Activated CD8-positive, alpha-beta T cell treated with anti-CD3 and anti-CD28 coated beads for 36 hours (primary cell): ENCODE measurements at regions of chr2 and their contacts with region 1.

Region 1: GRCh38 chr2:24577481-24577880 is 86.4 kb downstream of the NCOA1 start:
- DNase-seq: no peak
- ATAC-seq: peak; percentile 74
- H3K4me3 Mint-ChIP-seq: peak overlapping the region; percentile 51
- H3K27ac Mint-ChIP-seq: peak overlapping the region; percentile 66
- H3K4me1 Mint-ChIP-seq: peaks cover 78% of the 10 kb centered on the region
- H3K27me3 Mint-ChIP-seq: no peaks in the 10 kb centered on the region
- CTCF ChIP-seq: no peak

Region 2: GRCh38 chr2:24509425-24509824 is 68.1 kb before region 1 on chr2:
- CTCF ChIA-PET with region 1: no interaction called
- POLR2A ChIA-PET with region 1: no interaction called
- intact Hi-C with region 1: loop called (anchors 5 kb)
- DNase-seq: no peak
- ATAC-seq: no peak
- H3K4me3 Mint-ChIP-seq: no peak overlapping the region
- H3K27ac Mint-ChIP-seq: peak overlapping the region; percentile 34
- H3K4me1 Mint-ChIP-seq: peaks cover 68% of the 10 kb centered on the region
- H3K27me3 Mint-ChIP-seq: no peaks in the 10 kb centered on the region
- CTCF ChIP-seq: no peak

Region 3: GRCh38 chr2:24592441-24593100 is 15.1 kb after region 1 on chr2:
- CTCF ChIA-PET with region 1: interaction called, 13 read pairs
- POLR2A ChIA-PET with region 1: no interaction called
- intact Hi-C with region 1: no loop called
- DNase-seq: no peak
- ATAC-seq: no peak
- H3K4me3 Mint-ChIP-seq: no peak overlapping the region
- H3K27ac Mint-ChIP-seq: no peak overlapping the region
- H3K4me1 Mint-ChIP-seq: peaks cover 28% of the 10 kb centered on the region
- H3K27me3 Mint-ChIP-seq: no peaks in the 10 kb centered on the region
- CTCF ChIP-seq: no peak

Region 4: DNA sequence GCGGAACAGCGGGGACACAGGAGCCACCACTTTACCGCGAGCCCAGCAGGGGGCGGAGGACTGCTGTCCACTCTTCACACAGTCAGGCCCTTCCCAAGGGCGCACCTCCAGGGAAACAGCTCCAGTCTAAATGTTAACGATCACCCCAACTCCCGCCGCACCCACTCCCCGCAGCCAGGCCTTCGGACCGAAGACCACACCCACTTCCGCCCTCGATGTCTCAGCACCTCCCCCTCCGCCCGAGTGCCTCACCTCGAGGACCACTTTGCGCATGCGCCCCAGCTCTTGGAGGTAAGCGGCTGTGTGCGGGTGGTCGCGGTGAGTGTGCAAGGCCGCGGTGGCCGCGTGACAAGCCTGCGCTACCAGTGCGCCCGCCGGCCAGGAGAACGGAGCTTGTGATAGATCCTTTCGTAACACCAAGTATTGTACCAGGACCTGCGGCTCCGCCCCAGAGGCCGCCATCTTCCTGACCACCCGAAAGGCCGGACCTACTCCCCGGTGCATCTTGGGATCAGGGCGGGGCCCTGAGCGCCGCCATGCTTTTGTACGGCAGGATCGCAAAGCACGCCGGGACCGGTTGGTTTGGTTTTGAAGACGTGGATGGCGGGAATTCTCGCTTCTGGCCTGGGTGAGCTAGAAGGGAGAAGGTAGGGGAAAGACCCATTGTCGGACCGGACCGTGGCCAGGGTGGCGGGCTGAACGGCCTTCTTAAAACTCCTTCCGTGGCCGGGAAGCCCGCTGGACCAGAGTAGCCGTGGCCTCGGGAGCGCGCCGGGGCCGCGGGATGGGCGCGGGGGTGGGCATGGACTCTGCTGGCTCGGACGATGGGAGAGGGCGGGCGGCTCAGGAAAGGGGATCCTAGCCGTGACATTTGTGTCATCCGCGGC is 215.6 kb after region 1 on chr2 and contains the starts of genes CENPO and PTRHD1:
- CTCF ChIA-PET with region 1: no interaction called
- POLR2A ChIA-PET with region 1: no interaction called
- intact Hi-C with region 1: loop called (anchors 10 kb)
- DNase-seq: peak; percentile 98
- ATAC-seq: peak; percentile 98
- H3K4me3 Mint-ChIP-seq: peak within 1 kb of the TSS; percentile 95
- H3K27ac Mint-ChIP-seq: peak within 1 kb of the TSS; percentile 99
- H3K4me1 Mint-ChIP-seq: peaks cover 34% of the 10 kb centered on the region
- H3K27me3 Mint-ChIP-seq: no peaks in the 10 kb centered on the region
- CTCF ChIP-seq: no peak
- total RNA-seq, gene CENPO: 40.7 to 41.9 TPM
- total RNA-seq, gene PTRHD1: 23.2 to 24.9 TPM